Caco-2 (cell line): ENCODE measurements at regions of chr12 and their contacts with region 1.

Region 1: DNA sequence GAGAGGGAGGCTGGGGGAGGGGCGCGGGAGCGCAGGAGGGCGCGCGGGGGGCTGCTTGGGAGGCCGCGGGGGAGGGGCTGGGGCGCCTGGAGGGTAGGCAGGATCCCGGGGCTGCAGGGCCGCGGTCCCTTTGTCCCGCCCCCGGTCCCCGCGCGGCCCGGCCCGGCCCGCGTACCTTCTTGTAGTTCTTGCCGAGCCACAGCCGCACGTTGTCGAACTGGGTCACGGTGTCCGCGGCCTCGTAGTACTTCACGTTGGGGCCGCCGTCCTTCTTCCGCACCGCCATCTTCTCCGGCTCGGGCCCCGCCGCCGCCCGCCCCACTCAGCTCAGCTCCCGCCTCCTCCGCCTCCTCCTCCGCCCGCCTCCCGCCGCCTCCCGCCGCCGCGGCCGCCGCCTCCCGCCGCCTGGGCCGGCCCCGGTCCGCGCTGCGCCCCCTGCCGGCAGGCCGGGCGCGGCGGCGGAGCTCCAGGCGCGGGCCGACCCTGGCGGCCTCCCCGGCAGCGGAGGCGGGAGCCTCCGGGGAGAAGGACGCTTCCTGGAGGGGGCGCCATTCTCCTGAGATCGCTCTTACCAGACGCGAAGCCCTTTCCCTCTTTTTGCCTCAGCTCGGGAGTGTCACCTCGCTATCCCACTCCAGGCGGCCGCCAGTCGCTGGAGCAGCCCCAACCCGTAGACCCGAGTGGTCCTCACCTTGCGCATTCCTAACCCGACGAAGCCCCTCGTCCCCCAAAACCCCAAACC is at the start of gene SMARCC2:
- DNase-seq: peak; percentile 92 to 94
- H3K4me3 ChIP-seq: peak within 1 kb of the TSS; percentile 49
- H3K4me3 Mint-ChIP-seq: peak within 1 kb of the TSS; percentile 97
- H3K27ac Mint-ChIP-seq: peak within 1 kb of the TSS; percentile 98
- H3K4me1 ChIP-seq: peaks cover 19% of the 10 kb centered on the region
- H3K4me1 Mint-ChIP-seq: peaks cover 30% of the 10 kb centered on the region
- H3K27me3 ChIP-seq: no peaks in the 10 kb centered on the region
- H3K27me3 Mint-ChIP-seq: peaks cover 3% of the 10 kb centered on the region
- CTCF ChIP-seq: peak; percentile 73 to 74
- total RNA-seq, gene SMARCC2: 89.1 and 94.8 TPM in 2 replicates

Region 2: DNA sequence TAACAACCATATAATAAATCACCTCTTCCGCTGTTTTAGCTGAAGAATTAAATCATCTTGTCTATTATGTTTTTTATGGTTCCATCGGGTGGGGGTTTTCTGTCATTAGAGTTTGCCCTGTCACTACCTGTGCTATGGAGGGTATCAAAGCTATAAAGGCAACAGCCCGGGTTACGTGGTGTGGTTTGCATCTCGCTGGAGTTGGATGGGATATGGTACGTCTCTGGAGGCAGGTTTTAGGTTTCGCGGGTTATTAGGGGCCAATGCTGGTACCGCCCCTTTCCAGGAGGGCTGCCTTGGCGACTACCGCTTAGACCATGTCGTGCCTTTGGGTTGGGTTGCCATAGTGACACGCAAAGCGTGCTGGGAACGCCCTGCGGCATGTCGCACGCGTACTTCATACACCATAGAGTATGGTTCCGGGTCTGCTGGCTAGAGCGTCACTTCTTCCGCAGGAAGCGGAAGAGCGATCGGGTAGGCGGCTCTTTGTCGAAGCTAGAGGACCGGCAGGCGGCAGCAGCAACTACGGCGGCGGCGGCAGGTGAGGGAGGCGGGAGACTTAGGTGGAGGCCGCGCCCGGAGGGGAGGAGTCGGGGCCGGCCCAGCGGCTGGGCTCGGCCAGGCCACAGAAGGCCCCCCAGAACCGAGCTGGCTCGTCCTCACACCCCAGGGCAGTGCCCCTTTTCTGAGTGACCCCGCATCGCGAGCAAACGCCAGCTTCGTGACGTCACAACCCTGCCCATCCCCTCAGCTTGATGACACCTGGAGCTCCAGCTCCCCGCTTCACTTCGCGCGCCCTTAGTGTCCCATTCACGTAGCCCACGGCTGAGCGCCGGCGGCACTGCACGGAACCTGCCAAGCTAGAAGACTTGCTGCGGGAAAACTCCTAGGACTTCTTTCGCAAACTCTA is 71.3 kb before region 1 on chr12 and contains the start of gene ZC3H10:
- CTCF ChIA-PET with region 1: interaction called, 99 read pairs
- POLR2A ChIA-PET with region 1: interaction called, 20 read pairs
- intact Hi-C with region 1: loop called (anchors 1 kb)
- DNase-seq: peak; percentile 98 to 99
- H3K4me3 ChIP-seq: peak within 1 kb of the TSS; percentile 70
- H3K4me3 Mint-ChIP-seq: peak within 1 kb of the TSS; percentile 97
- H3K27ac Mint-ChIP-seq: peak within 1 kb of the TSS; percentile 100
- H3K4me1 ChIP-seq: peaks cover 18% of the 10 kb centered on the region
- H3K4me1 Mint-ChIP-seq: peaks cover 20% of the 10 kb centered on the region
- H3K27me3 ChIP-seq: no peaks in the 10 kb centered on the region
- H3K27me3 Mint-ChIP-seq: peaks cover 2% of the 10 kb centered on the region
- CTCF ChIP-seq: peak in 1 of 2 experiments; percentile 53
- total RNA-seq, gene ZC3H10: 3.5 and 4.4 TPM in 2 replicates

Region 3: DNA sequence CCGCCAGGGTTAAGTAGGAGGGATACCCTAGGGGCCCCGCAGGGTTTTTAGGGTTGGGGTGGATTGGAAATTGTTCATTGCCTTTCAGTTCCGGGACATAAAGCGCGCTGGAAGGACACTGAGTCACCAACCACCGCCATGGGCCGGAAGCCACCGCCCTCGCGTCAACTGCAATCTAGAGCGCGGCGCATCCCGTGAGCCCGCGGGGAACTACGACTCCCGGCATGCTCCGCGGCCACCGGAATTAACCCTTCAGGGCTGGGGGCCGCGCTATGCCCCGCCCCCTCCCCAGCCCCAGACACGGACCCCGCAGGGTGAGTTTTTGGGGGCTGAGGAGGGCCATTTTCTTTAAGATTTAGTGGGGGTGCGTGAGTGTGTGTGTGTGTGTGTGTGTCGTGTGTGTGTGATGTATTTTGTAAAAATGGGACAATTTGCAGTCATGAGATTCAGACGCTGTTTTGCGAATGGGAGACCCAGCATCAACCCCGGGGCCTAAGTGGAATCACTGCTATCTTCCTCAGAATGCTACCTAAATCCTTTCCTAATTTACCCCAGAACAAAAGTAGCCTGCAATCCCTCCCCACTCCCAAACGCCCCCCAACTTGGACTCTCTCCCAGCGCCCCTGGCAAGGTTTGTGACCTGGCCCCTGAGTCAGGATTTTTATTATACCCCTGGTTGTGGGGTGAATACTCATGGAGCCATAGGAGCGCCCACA is 36.9 kb before region 1 on chr12 and contains the start of gene MYL6B:
- CTCF ChIA-PET with region 1: interaction called, 12 read pairs
- POLR2A ChIA-PET with region 1: no interaction called
- intact Hi-C with region 1: no loop called
- DNase-seq: peak; percentile 88 to 92
- H3K4me3 ChIP-seq: peak within 1 kb of the TSS; percentile 73
- H3K4me3 Mint-ChIP-seq: peak within 1 kb of the TSS; percentile 87
- H3K27ac Mint-ChIP-seq: peak within 1 kb of the TSS; percentile 98
- H3K4me1 ChIP-seq: peaks cover 12% of the 10 kb centered on the region
- H3K4me1 Mint-ChIP-seq: peaks cover 20% of the 10 kb centered on the region
- H3K27me3 ChIP-seq: no peaks in the 10 kb centered on the region
- H3K27me3 Mint-ChIP-seq: no peaks in the 10 kb centered on the region
- CTCF ChIP-seq: no peak
- total RNA-seq, gene MYL6B: 40.5 and 44.8 TPM in 2 replicates

Region 4: GRCh38 chr12:56172831-56173230 is 16.5 kb before region 1 on chr12:
- CTCF ChIA-PET with region 1: interaction called, 13 read pairs
- POLR2A ChIA-PET with region 1: no interaction called
- intact Hi-C with region 1: no loop called
- DNase-seq: no peak
- H3K4me3 ChIP-seq: no peak overlapping the region
- H3K4me3 Mint-ChIP-seq: no peak overlapping the region
- H3K27ac Mint-ChIP-seq: no peak overlapping the region
- H3K4me1 ChIP-seq: no peaks in the 10 kb centered on the region
- H3K4me1 Mint-ChIP-seq: peaks cover under 1% of the 10 kb centered on the region
- H3K27me3 ChIP-seq: no peaks in the 10 kb centered on the region
- H3K27me3 Mint-ChIP-seq: no peaks in the 10 kb centered on the region
- CTCF ChIP-seq: no peak

Region 5: GRCh38 chr12:56224102-56224701 is 34.9 kb after region 1 on chr12 and contains the start of gene NABP2:
- CTCF ChIA-PET with region 1: interaction called, 38 read pairs
- POLR2A ChIA-PET with region 1: interaction called, 11 read pairs
- intact Hi-C with region 1: loop called (anchors 1 kb)
- DNase-seq: peak; percentile 98
- H3K4me3 ChIP-seq: peak within 1 kb of the TSS; percentile 72
- H3K4me3 Mint-ChIP-seq: peak within 1 kb of the TSS; percentile 99
- H3K27ac Mint-ChIP-seq: peak within 1 kb of the TSS; percentile 98
- H3K4me1 ChIP-seq: peaks cover 6% of the 10 kb centered on the region
- H3K4me1 Mint-ChIP-seq: peaks cover under 1% of the 10 kb centered on the region
- H3K27me3 ChIP-seq: no peaks in the 10 kb centered on the region
- H3K27me3 Mint-ChIP-seq: no peaks in the 10 kb centered on the region
- CTCF ChIP-seq: peak; percentile 82 to 89
- total RNA-seq, gene NABP2: 32.1 and 37.7 TPM in 2 replicates

Region 6: DNA sequence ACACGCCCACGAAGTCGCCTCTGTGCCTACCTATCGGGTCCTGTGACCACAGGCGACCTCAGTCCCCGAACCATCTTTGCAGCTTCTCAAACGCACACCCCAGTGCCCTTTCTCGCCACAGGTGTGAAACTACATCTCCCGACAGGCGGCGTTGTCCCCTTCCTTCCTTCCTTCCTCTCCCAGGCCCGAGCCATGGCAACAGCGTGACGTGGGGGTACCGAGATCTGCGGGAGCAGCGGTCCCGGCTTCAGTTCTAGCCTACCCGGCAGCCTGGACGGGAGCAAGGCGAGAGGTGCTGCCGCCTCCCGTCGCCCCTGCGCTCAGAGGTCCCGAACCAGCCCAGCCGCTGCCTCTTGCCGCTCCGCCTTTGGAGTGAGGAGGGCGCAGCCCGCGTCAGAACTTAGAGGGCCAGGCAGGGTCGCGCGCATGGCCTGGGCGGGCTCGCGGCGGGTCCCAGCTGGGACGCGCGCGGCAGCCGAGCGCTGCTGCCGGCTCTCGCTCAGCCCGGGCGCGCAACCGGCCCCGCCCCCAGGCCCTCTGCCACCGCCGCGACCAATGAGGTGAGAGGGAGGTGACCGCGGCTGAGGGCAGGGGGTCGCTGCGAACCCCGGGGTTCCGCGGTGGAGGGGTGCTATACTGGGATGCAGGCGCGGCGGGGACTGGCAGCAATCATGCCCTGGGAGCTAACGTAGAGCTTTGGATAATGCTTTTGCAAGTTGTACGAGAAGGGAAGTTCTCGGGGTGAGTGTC is 77.5 kb after region 1 on chr12 and contains the start of gene COQ10A:
- CTCF ChIA-PET with region 1: interaction called, 3 read pairs
- POLR2A ChIA-PET with region 1: interaction called, 4 read pairs
- intact Hi-C with region 1: loop called (anchors 5 kb)
- DNase-seq: peak; percentile 90 to 92
- H3K4me3 ChIP-seq: peak within 1 kb of the TSS; percentile 65
- H3K4me3 Mint-ChIP-seq: peak within 1 kb of the TSS; percentile 83
- H3K27ac Mint-ChIP-seq: peak within 1 kb of the TSS; percentile 61
- H3K4me1 ChIP-seq: peaks cover 12% of the 10 kb centered on the region
- H3K4me1 Mint-ChIP-seq: peaks cover 12% of the 10 kb centered on the region
- H3K27me3 ChIP-seq: no peaks in the 10 kb centered on the region
- H3K27me3 Mint-ChIP-seq: no peaks in the 10 kb centered on the region
- CTCF ChIP-seq: peak; percentile 39 to 74
- total RNA-seq, gene COQ10A: 16.7 and 18.4 TPM in 2 replicates

Region 7: GRCh38 chr12:56468216-56469006 is 279.1 kb after region 1 on chr12 and contains the start of gene SPRYD4:
- CTCF ChIA-PET with region 1: no interaction called
- POLR2A ChIA-PET with region 1: no interaction called
- intact Hi-C with region 1: loop called (anchors 5 kb)
- DNase-seq: peak; percentile 89 to 92
- H3K4me3 ChIP-seq: peak within 1 kb of the TSS; percentile 66
- H3K4me3 Mint-ChIP-seq: peak within 1 kb of the TSS; percentile 96
- H3K27ac Mint-ChIP-seq: peak within 1 kb of the TSS; percentile 99
- H3K4me1 ChIP-seq: peaks cover 15% of the 10 kb centered on the region; the same call in 1 of the 2 replicates
- H3K4me1 Mint-ChIP-seq: peaks cover 6% of the 10 kb centered on the region
- H3K27me3 ChIP-seq: no peaks in the 10 kb centered on the region
- H3K27me3 Mint-ChIP-seq: no peaks in the 10 kb centered on the region
- CTCF ChIP-seq: peak in 1 of 2 experiments; percentile 38
- total RNA-seq, gene SPRYD4: 2.8 TPM in 2 replicates